ENCODE measurements at regions of chr14 and their contacts with region 1.

Region 1: DNA sequence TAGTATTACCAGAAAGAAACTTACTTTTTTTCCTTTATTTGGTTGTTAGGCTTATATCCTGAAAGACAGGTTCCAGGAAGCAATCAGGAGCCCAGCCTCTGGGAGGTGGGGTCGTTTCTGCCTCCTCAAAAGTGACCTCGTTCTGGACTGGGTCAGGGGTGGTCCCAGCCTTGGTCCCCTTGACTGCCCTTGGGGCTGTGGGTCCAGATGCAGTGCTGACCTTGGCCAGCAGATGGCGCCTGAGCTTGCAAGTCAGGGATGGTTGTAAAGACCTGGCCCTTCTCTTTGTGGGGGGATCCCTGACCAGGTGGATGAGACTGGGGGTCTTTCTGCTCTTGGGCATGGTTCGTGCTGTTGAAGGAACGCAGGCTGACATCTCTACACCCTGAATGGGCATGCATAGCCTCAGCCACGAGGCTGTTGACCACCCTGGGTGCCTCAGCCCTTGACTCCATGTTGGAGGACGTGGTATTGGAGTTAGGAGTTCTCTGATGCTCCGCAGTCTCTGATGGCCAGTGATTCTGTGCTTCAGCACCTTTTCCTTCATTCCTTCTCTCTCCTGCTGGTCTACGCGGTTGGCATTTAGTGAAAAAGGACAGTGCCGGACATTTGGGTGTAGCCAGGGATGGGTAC is 62.4 kb downstream of the ADCK1 start:
- DNase-seq: peak; percentile 45
- ATAC-seq: peak; percentile 93
- H3K4me3 ChIP-seq: no peak overlapping the region
- H3K27ac ChIP-seq: no peak overlapping the region
- H3K4me1 ChIP-seq: no peaks in the 10 kb centered on the region; a peak in 1 of 4 replicates
- H3K27me3 ChIP-seq: no peaks in the 10 kb centered on the region
- CTCF ChIP-seq: peak; percentile 65 to 99 (median 98)
- POLR2A ChIP-seq: no peak
- RAD21 ChIP-seq: peak; percentile 85

Region 2: GRCh38 chr14:77991128-77991772 is 129.0 kb after region 1 on chr14:
- CTCF ChIA-PET with region 1: interaction called, 3 read pairs
- POLR2A ChIA-PET with region 1: no interaction called
- RAD21 ChIA-PET with region 1: no interaction called
- intact Hi-C with region 1: loop called (anchors 2 kb)
- DNase-seq: no peak
- ATAC-seq: peak; percentile 65; the same call in 1 of the 2 replicates
- H3K4me3 ChIP-seq: no peak overlapping the region
- H3K27ac ChIP-seq: no peak overlapping the region
- H3K4me1 ChIP-seq: no peaks in the 10 kb centered on the region
- H3K27me3 ChIP-seq: no peaks in the 10 kb centered on the region
- CTCF ChIP-seq: peak; percentile 13 to 24 (median 22); a peak in 2 of 6 replicates
- POLR2A ChIP-seq: no peak
- RAD21 ChIP-seq: peak; percentile 37

Region 3: GRCh38 chr14:78207414-78207813 is 345.1 kb after region 1 on chr14:
- CTCF ChIA-PET with region 1: no interaction called
- POLR2A ChIA-PET with region 1: no interaction called
- RAD21 ChIA-PET with region 1: no interaction called
- intact Hi-C with region 1: no loop called
- DNase-seq: no peak
- ATAC-seq: no peak
- H3K4me3 ChIP-seq: no peak overlapping the region
- H3K27ac ChIP-seq: no peak overlapping the region
- H3K4me1 ChIP-seq: no peaks in the 10 kb centered on the region
- H3K27me3 ChIP-seq: peaks cover 6% of the 10 kb centered on the region; the same call in 1 of the 2 replicates
- CTCF ChIP-seq: no peak
- POLR2A ChIP-seq: no peak
- RAD21 ChIP-seq: no peak

Region 4: DNA sequence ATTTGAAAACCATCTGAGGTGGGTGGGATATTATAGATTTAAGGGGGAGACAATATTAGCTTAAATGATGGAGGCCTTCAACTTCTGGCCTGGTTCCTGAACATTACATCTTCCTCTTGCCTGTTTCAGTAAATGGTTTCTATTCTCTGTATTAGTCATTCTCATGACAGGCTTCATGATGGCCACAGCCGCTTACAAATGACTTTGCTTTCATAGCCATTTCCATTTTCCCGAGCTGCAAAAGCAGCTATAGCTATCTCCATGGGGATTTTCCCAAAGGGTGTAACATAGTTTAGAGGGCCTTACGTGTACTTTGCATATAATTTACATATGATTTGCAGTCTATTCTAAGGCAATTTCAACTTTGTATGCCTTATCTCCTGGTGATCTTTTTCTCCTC is 429.7 kb after region 1 on chr14:
- CTCF ChIA-PET with region 1: no interaction called
- POLR2A ChIA-PET with region 1: no interaction called
- RAD21 ChIA-PET with region 1: no interaction called
- intact Hi-C with region 1: no loop called
- DNase-seq: no peak
- ATAC-seq: no peak
- H3K4me3 ChIP-seq: no peak overlapping the region
- H3K27ac ChIP-seq: no peak overlapping the region
- H3K4me1 ChIP-seq: no peaks in the 10 kb centered on the region
- H3K27me3 ChIP-seq: peaks cover 24% of the 10 kb centered on the region
- CTCF ChIP-seq: no peak
- POLR2A ChIP-seq: no peak
- RAD21 ChIP-seq: no peak

Region 5: DNA sequence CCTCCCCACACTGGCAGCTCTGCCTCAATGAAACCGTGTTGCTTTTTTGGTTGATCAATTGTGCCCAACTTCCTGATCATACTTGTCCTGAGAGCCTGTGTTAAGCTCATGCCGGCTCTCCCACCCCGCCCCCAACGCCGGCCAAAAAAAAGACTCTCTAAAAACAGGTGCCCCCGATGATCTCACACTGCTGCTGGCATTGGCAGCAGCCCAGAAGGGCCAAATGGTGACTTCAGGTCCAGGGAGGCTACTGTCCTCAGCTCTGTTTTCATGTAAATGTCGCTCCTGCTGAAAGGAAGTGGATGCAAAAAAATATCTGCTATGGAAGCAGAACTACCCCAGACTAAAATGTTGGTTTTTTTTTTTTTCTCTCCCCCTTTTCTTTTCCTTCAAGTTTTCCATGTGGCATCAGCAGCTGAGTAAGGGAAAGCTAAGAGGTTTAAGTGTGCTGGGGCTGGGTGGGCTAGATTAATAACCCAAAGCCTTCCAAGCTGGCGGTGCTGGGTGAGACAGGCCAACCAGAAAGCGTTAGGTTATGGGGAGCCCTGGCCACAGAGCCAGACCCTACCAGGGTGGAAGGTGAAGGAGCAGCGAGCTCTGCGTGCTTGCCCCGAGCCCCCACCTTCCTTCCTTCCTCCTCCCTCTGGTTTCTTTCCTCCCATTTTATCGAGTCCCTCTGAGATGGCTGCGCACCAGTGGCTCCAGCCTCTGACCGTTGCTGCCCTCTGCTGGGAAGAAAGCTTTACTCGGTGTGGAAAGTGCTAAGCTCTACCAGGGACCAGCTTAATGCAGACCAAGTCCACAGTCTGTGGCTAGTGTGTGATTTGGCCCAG is 704.0 kb after region 1 on chr14:
- CTCF ChIA-PET with region 1: interaction called, 8 read pairs
- POLR2A ChIA-PET with region 1: no interaction called
- RAD21 ChIA-PET with region 1: no interaction called
- intact Hi-C with region 1: loop called (anchors 5 kb)
- DNase-seq: peak; percentile 8
- ATAC-seq: peak; percentile 93
- H3K4me3 ChIP-seq: no peak overlapping the region
- H3K27ac ChIP-seq: no peak overlapping the region
- H3K4me1 ChIP-seq: no peaks in the 10 kb centered on the region
- H3K27me3 ChIP-seq: no peaks in the 10 kb centered on the region
- CTCF ChIP-seq: peak; percentile 25 to 68 (median 63); a peak in 4 of 6 replicates
- POLR2A ChIP-seq: no peak
- RAD21 ChIP-seq: peak; percentile 61

Region 6: DNA sequence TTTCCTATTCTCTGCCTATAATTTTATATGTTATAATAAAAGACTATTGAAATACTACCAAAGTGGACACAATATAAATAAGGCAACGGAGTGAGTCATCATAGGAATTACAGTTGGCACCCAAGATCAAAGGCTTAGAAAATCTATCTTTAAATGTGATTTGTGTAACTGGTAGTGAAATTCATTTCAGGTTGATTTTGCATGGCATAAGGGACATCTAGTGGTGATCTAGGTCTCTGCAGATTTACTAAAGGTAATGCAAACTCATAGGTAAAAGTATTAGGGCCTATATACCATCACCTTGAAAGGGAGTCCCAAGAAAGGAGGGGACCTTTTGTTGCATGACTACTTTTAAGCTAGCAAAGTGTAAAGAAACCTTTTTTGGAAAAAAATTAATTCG is 835.1 kb after region 1 on chr14:
- CTCF ChIA-PET with region 1: no interaction called
- POLR2A ChIA-PET with region 1: no interaction called
- RAD21 ChIA-PET with region 1: no interaction called
- intact Hi-C with region 1: loop called (anchors 10 kb)
- DNase-seq: peak; percentile 3
- ATAC-seq: no peak
- H3K4me3 ChIP-seq: no peak overlapping the region
- H3K27ac ChIP-seq: no peak overlapping the region
- H3K4me1 ChIP-seq: no peaks in the 10 kb centered on the region
- H3K27me3 ChIP-seq: no peaks in the 10 kb centered on the region
- CTCF ChIP-seq: peak in 2 of 3 experiments; percentile 38 to 45; a peak in 4 of 6 replicates
- POLR2A ChIP-seq: no peak
- RAD21 ChIP-seq: peak; percentile 44